ENCODE measurements at regions of chr12 and their contacts with region 1.

Region 1: DNA sequence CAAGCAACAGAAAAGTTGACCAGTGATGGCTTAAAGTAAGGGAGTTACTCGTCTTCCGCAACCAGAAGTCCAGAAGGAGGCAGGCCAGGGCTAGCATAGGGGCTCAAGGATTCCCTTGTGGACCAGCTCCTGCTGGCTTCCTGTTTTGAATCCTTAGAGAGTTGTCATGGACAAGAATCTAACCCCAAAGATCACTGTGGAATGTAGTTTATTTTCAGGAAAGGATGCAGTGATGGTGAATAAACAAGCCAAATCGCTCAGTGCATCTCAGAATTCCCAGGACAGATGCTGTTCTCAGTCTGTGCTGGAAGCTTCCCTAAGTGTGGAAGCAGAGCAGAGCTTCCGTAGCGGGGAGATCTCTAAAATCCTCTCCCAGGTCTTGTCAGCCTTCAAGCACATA is 311.3 kb downstream of the C12orf75 start:
- DNase-seq: no peak
- ATAC-seq: peak; percentile 38

Region 2: GRCh38 chr12:106066051-106066705 is 424.4 kb after region 1 on chr12:
- intact Hi-C with region 1: loop called (anchors 5 kb)
- DNase-seq: no peak
- ATAC-seq: no peak